Left cardiac atrium (tissue), 4 donors: ENCODE measurements at regions of chr3 and their contacts with region 1.

Region 1: GRCh38 chr3:17233398-17233800 is 348.6 kb downstream of the PLCL2 start:
- DNase-seq: no peak
- ATAC-seq: peak; percentile 79 to 87

Region 2: DNA sequence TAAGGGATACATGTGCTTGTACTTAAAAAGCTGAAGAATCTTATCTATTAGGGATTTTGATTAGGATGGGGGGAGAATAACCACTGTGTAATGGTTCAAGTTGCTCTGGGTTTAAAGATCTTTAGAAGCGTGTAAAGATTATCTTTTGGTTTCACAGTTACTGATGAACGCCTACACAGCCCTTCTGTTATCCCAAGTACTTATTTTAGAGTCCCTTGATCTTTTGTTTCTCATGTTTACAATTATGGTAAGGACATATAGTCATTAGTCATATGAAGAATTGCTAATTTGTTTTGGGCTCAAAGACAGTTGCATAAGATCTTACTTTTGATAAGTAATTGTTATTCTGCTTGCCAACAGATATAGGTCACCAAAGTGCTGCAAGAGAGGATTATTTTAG is 188.5 kb before region 1 on chr3:
- intact Hi-C with region 1: loop called in 1 of 2 experiments (anchors 10 kb)
- DNase-seq: no peak
- ATAC-seq: no peak